ENCODE measurements at regions of chr12 and their contacts with region 1.

Region 1: DNA sequence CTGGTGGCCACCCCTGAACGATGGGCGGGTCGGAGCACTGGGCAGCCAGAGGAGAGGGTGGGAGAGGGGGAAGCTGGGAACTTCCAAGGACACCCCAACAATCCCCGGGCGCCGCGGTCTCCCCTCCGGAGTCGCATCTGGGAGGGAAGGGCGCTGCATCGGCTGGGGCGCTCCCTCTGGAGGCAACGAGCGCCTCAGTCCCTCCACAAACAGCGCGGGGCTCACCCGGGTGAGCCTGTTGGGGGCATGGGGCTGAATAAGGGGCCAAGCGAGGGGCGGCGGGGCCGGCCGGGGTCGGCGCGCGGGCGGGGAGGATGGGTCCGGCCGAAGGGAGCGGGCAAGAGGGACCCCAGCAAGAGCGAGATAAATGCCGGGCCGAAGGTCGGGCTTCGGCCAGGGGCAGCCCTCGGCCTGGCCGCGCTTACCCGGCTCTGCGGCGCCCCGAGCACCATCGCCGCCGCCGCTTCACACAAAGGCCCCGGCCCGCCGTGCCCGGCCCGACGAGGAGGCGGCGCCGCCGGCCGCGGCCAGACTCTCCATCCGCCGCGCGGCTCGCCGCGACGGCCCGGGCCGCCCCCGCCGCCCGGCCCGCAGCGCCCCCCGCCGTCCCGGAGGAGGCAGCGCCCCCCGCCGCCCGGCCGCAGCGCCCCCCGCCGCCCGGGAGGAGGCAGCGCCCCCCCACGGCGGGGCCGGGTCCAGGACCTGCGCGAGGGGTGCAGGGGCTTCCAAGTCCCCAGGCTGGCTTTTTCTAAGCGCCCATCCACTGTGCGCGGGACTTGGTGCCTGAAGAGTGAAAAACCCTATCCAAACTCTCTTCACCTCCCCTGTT is at the start of gene ZBTB39:
- DNase-seq: no peak
- H3K4me3 ChIP-seq: peak within 1 kb of the TSS; percentile 84
- H3K27me3 ChIP-seq: no peaks in the 10 kb centered on the region
- CTCF ChIP-seq: peak; percentile 49
- polyA plus RNA-seq, gene ZBTB39: 3.9 and 4.2 TPM in 2 replicates

Region 2: GRCh38 chr12:56688129-56688845 is 317.9 kb before region 1 on chr12 and contains the start of gene PTGES3:
- CTCF ChIA-PET with region 1: no interaction called
- POLR2A ChIA-PET with region 1: no interaction called
- DNase-seq: peak; percentile 92
- H3K4me3 ChIP-seq: peak within 1 kb of the TSS; percentile 73
- H3K27me3 ChIP-seq: no peaks in the 10 kb centered on the region
- CTCF ChIP-seq: no peak
- polyA plus RNA-seq, gene PTGES3: 24.7 and 49.1 TPM in 2 replicates

Region 3: GRCh38 chr12:56766535-56766934 is 239.7 kb before region 1 on chr12:
- CTCF ChIA-PET with region 1: interaction called, 220 read pairs
- POLR2A ChIA-PET with region 1: no interaction called
- DNase-seq: no peak
- H3K4me3 ChIP-seq: no peak overlapping the region
- H3K27me3 ChIP-seq: no peaks in the 10 kb centered on the region
- CTCF ChIP-seq: no peak

Region 4: GRCh38 chr12:57016318-57016717 is 10.1 kb after region 1 on chr12 and contains the start of gene TAC3:
- CTCF ChIA-PET with region 1: interaction called, 16 read pairs
- POLR2A ChIA-PET with region 1: no interaction called
- DNase-seq: no peak
- H3K4me3 ChIP-seq: no peak within 1 kb of the TSS
- H3K27me3 ChIP-seq: peaks cover 36% of the 10 kb centered on the region
- CTCF ChIP-seq: no peak
- polyA plus RNA-seq, gene TAC3: not detected in 2 replicates

Region 5: DNA sequence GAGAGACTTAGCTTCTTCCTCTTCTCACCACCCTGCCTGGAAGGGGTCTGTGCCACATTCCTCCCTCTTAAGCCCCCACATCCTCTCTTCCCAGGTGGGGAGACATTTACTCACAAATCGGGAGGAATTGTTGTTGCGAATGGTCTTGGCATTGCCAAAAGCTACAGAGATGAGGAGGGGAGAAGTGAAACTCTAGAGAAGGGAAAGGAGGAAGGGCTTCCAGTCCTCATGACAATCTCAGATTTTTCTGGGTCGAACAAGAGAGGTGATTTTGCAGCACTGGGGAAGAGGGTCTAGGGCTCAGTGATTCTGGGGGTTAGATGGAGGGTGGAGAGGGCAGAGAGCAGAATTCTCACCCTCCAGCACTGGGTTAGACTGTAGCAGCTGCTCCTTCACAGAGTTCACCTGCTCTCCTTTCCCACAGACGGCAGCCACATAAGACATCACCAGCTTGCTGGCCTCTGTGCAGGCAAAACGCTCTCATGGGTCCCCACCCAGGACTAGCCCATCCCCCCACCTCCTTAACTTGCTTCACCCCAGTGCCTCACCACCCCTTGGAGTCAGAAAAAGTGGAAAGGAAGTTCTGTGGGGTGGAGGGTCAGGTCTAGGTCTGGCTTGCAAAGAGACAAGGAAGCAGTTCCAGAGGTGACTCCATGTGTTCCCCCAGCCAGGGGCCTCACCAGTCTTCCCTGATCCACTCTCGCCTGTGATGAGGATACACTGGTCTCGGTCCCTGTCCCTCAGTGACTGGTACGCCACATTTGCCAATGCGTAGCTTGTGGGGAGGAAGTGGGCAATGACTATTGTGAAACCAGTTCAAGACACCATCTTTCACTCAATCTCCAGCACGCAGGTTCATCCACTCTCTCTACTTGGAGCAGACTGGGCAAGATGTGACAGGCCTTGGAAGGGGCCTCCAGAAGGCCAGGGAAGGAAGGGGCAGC is 41.0 kb after region 1 on chr12:
- CTCF ChIA-PET with region 1: interaction called, 20 read pairs
- POLR2A ChIA-PET with region 1: interaction called, 3 read pairs
- DNase-seq: no peak
- H3K4me3 ChIP-seq: no peak overlapping the region
- H3K27me3 ChIP-seq: peaks cover 6% of the 10 kb centered on the region
- CTCF ChIP-seq: no peak

Region 6: DNA sequence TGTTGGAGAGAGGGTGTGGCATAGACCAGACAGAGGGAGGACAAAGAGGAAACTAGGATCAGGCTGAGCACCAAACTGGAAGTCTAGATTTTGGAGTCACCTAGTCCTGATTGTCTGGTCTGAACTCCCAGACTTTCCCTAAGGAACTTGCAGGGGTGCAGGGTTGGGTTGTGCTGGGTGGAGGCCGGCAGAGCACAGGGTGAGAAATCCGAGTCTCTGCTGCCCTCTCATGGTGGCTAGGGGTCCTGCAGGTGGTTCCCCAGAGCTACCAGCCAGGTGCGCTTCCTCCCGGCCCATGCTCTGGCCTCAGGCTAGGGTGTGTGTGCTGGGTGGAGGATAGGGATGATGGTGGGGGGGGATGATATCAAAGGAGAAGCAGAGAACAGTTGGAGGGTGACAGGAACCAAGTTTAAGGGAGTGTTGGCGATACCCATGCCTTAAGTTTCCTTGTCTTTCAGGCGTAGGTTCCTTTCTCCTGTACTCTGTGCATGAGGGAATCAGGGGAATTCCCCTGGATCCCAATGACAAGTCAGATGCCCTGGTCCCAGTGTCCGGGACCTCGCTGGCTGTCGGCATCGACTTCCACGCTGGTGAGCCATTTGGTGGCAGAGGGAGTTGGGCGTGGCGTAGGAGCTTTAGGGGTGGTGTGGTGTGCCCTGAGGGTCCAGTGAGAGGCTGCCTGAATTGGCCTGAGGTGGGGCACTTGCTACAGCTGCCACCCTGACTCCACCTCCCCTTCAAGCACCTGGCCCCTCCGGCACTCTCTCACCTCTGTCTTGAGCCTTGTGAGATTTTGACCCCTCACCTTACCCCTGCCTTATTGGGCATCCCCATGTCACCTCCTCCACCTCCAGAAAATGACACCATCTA is 177.0 kb after region 1 on chr12:
- CTCF ChIA-PET with region 1: no interaction called
- POLR2A ChIA-PET with region 1: no interaction called
- DNase-seq: no peak
- H3K4me3 ChIP-seq: no peak overlapping the region
- H3K27me3 ChIP-seq: no peaks in the 10 kb centered on the region
- CTCF ChIP-seq: peak; percentile 84